Prostate gland (tissue), 2 donors: ENCODE measurements at regions of chr19 and their contacts with region 1.

Region 1: DNA sequence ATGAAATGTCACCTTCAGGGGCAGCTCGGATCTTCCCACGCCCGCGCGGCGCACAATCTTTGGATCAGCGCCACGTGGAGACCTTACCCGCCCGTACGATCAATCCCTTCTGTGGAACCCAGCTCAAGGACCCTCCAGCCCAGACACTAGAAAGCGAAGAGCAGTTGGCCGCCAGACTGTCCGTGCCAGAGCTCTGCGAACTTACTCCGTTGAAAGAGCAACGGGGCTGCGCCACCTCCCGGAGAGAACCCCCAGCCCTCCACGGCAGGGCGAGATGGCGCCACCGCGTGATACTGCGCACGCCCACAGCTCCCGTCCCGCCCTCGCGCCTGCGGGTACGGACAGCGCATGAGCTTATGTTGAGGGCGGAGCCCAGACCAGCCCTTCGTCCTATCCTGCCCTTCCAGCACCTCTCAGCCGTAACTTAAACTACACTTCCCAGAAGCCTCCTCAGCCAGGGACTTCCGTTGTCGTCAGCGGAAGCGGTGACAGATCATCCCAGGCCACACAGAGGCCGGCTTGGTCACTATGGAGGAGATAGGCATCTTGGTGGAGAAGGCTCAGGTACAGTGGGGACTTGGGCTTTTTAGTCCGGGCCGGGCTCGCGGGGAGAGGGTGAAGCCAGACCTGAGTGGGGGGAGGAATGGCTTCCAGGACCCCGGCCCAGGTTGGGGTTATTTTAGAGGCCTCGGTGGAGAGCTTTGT is at the start of gene PSMC4:
- DNase-seq: peak; percentile 98
- H3K4me3 ChIP-seq: peak within 1 kb of the TSS; percentile 58 to 62
- H3K27ac ChIP-seq: peak within 1 kb of the TSS; percentile 90 to 91
- H3K4me1 ChIP-seq: peaks cover 8% of the 10 kb centered on the region
- H3K27me3 ChIP-seq: no peaks in the 10 kb centered on the region
- CTCF ChIP-seq: peak; percentile 48 to 94 (median 91)
- POLR2A ChIP-seq: peak; percentile 88
- total RNA-seq, gene PSMC4: 86.1 to 129 TPM

Region 2: GRCh38 chr19:39792999-39793546 is 177.8 kb before region 1 on chr19:
- intact Hi-C with region 1: loop called (anchors 2 kb)
- DNase-seq: peak; percentile 54
- H3K4me3 ChIP-seq: peak overlapping the region; percentile 26 to 33
- H3K27ac ChIP-seq: no peak overlapping the region
- H3K4me1 ChIP-seq: no peaks in the 10 kb centered on the region
- H3K27me3 ChIP-seq: no peaks in the 10 kb centered on the region
- CTCF ChIP-seq: peak in 3 of 4 experiments; percentile 69 to 85 (median 71)
- POLR2A ChIP-seq: no peak

Region 3: DNA sequence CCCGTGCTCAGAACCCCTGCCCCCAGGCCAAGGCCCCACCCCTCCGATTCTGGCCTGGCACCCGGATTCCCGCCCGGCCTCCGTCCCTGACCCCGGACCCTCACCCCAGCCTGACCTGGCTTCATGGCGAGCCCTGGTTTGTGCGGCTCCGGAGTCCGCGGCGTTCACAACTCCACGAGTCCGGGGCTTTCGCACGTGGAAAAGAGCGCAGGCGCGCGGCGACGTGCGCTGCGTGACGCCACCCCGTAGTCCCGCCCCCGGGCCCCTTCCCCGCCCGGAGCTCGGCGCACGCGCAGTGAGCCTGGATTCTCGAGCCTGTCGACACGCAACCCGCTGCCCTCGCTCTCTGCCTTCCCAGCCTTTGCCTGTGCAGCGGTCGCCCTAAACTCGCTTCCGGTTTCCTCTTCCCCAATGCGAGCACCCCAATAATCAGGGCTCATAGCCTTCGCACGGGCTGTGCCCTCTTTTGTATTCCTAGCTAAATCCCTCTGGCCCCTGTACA is 124.6 kb before region 1 on chr19 and contains the start of gene FBL:
- intact Hi-C with region 1: loop called (anchors 5 kb)
- DNase-seq: peak; percentile 94
- H3K4me3 ChIP-seq: peak within 1 kb of the TSS; percentile 60 to 85
- H3K27ac ChIP-seq: peak within 1 kb of the TSS; percentile 74 to 86
- H3K4me1 ChIP-seq: peaks cover 6% of the 10 kb centered on the region
- H3K27me3 ChIP-seq: no peaks in the 10 kb centered on the region
- CTCF ChIP-seq: peak in 1 of 4 experiments; percentile 6
- POLR2A ChIP-seq: peak; percentile 70
- total RNA-seq, gene FBL: 139 to 224 TPM

Region 4: GRCh38 chr19:39951686-39952085 is 19.1 kb before region 1 on chr19:
- intact Hi-C with region 1: no loop called
- DNase-seq: no peak
- H3K4me3 ChIP-seq: no peak overlapping the region
- H3K27ac ChIP-seq: no peak overlapping the region
- H3K4me1 ChIP-seq: no peaks in the 10 kb centered on the region
- H3K27me3 ChIP-seq: no peaks in the 10 kb centered on the region
- CTCF ChIP-seq: no peak
- POLR2A ChIP-seq: no peak